ENCODE measurements at regions of chr6 and their contacts with region 1.

Region 1: DNA sequence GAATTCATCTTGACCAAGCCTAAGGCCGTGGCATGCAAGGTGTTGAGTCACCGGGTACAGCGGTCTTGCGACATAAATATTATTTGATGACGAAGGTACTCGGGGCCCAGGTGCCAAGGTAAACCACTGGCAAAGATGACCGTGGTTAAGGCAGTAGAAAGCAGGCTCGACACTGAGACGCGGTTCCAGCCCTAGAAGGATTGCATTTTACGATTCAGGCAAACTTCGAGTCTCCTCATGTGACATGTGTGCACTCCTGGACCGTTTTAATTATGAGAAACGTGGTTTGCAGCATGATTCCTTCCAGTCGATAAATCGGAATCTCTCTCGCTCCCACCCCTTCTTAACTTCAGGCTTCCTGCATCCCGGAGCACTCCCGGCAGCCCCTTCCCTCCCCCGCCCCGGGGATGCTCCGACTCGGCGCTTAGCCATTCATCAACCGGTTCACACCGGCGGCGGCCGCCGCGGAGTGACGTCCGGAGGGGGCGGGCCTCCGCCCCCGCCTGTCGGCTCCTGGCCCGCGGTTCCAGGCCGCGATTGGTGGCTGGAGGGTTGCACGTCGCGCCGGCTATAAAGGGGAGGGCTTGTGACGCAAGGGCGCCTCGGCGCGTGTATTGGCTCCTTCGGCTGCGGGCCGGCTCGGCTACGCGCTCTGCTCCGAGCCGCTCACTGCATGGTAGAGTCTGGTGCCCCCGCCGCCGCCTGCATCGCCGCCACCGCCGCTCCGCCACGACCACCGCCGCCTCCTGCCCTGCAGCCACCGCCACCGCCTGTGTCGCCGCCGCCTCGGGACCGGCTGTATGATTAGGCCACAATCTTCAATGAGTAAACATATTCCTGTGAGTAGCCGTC is at the starts of genes LOC128125822 and PTP4A1:
- DNase-seq: peak; percentile 98
- H3K4me3 Mint-ChIP-seq: peak within 1 kb of the TSS; percentile 88
- H3K27ac Mint-ChIP-seq: peak within 1 kb of the TSS; percentile 96
- H3K4me1 Mint-ChIP-seq: peaks cover 8% of the 10 kb centered on the region
- H3K27me3 Mint-ChIP-seq: no peaks in the 10 kb centered on the region
- CTCF ChIP-seq: no peak
- total RNA-seq, gene PTP4A1: 239 and 382 TPM in 2 replicates

Region 2: GRCh38 chr6:63347599-63347998 is 224.5 kb before region 1 on chr6:
- CTCF ChIA-PET with region 1: interaction called, 35 read pairs
- POLR2A ChIA-PET with region 1: interaction called, 64 read pairs
- intact Hi-C with region 1: no loop called
- DNase-seq: peak; percentile 72
- H3K4me3 Mint-ChIP-seq: no peak overlapping the region
- H3K27ac Mint-ChIP-seq: peak overlapping the region; percentile 43
- H3K4me1 Mint-ChIP-seq: peaks cover 13% of the 10 kb centered on the region
- H3K27me3 Mint-ChIP-seq: no peaks in the 10 kb centered on the region
- CTCF ChIP-seq: no peak

Region 3: DNA sequence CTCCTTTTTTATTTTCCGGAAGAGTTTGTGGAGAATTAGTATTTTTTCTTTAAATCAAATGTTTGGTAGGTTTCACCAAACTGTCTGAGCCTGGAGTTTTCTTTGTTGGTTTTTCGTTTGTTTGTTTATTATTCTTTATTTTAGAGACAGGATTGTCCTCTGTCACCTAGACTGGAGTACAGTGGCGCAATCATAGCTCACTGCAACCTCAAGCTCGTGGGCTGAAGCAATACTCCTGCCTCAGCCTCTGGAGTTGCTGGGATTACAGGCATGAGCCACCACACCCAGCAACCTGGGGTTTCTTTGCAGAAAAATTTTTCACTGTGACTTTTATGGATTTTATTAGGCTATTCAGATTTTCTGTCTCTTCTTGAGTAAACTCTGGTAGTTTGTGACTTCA is 120.0 kb before region 1 on chr6:
- CTCF ChIA-PET with region 1: no interaction called
- POLR2A ChIA-PET with region 1: no interaction called
- intact Hi-C with region 1: loop called (anchors 1 kb)
- DNase-seq: peak; percentile 69
- H3K4me3 Mint-ChIP-seq: no peak overlapping the region
- H3K27ac Mint-ChIP-seq: no peak overlapping the region
- H3K4me1 Mint-ChIP-seq: peaks cover 6% of the 10 kb centered on the region
- H3K27me3 Mint-ChIP-seq: no peaks in the 10 kb centered on the region
- CTCF ChIP-seq: no peak

Region 4: DNA sequence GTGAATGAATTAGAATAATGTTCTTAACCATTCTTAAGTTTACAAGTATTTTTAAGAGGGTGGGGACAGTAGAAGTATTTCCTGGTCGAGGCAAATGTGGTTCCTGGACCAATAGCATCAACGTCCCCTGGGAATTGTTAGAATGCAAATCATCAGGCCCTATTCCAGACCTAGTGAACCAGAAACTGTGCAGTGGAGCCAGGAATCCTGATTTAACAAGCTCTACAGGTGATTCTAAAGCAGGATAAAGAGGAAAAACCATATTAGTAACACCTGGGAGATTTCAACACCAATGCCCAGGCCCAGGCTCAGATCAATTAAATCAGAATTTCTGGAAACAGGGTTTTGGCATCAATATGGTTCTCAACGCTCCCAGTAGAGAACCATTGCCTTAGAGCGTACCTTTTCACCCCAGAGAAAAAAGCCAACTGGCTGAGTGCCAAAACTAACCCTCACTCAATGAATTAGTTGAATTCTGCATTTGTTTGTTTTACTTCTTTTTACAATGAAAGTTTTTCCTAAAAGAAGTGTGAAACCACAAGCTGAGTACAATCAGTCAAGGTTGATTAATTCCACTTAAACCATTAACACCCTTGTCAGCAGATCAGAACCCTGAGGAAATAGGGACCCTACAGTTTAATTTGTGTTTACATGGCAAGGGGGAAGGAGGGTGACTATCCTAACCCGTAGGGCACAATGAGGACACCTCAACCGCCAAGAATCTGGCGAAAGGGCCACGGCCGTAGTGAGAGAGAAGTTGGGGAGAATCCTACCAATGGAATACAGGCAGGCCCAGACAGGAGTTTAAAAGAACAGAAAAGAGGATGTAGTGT is 34.8 kb before region 1 on chr6:
- CTCF ChIA-PET with region 1: interaction called, 11 read pairs
- POLR2A ChIA-PET with region 1: interaction called, 41 read pairs
- intact Hi-C with region 1: no loop called
- DNase-seq: peak; percentile 92
- H3K4me3 Mint-ChIP-seq: no peak overlapping the region
- H3K27ac Mint-ChIP-seq: peak overlapping the region; percentile 74
- H3K4me1 Mint-ChIP-seq: peaks cover 13% of the 10 kb centered on the region
- H3K27me3 Mint-ChIP-seq: no peaks in the 10 kb centered on the region
- CTCF ChIP-seq: no peak

Region 5: DNA sequence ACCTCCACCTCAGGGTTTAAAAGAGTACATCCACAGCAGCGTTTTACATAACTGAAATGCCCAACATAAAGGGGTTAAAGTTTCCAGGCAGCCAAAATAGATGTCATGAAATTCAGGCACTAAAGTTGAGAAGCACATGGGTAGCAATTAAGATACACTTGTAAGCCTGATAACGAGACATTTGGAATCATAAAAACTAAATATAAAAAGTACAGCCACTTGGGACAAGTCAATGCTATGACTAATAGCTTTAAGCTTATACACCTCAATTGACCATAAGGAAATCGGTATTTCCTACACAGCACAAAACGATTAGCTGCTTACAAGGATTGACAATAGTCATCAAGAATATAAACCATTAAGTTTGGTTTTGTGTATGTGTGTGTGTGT is 12.0 kb after region 1 on chr6:
- CTCF ChIA-PET with region 1: interaction called, 10 read pairs
- POLR2A ChIA-PET with region 1: interaction called, 10 read pairs
- intact Hi-C with region 1: no loop called
- DNase-seq: peak; percentile 44
- H3K4me3 Mint-ChIP-seq: no peak overlapping the region
- H3K27ac Mint-ChIP-seq: no peak overlapping the region
- H3K4me1 Mint-ChIP-seq: peaks cover 4% of the 10 kb centered on the region
- H3K27me3 Mint-ChIP-seq: no peaks in the 10 kb centered on the region
- CTCF ChIP-seq: no peak

Region 6: GRCh38 chr6:63635588-63636517 is 63.7 kb after region 1 on chr6 and contains the start of gene PHF3:
- CTCF ChIA-PET with region 1: no interaction called
- POLR2A ChIA-PET with region 1: interaction called, 51 read pairs
- intact Hi-C with region 1: no loop called
- DNase-seq: peak; percentile 86
- H3K4me3 Mint-ChIP-seq: peak within 1 kb of the TSS; percentile 89
- H3K27ac Mint-ChIP-seq: peak within 1 kb of the TSS; percentile 95
- H3K4me1 Mint-ChIP-seq: peaks cover 24% of the 10 kb centered on the region
- H3K27me3 Mint-ChIP-seq: no peaks in the 10 kb centered on the region
- CTCF ChIP-seq: peak; percentile 5
- total RNA-seq, gene PHF3: 41.0 and 46.4 TPM in 2 replicates

Region 7: GRCh38 chr6:63783096-63783495 is 211.0 kb after region 1 on chr6:
- CTCF ChIA-PET with region 1: no interaction called
- POLR2A ChIA-PET with region 1: no interaction called
- intact Hi-C with region 1: no loop called
- DNase-seq: no peak
- H3K4me3 Mint-ChIP-seq: no peak overlapping the region
- H3K27ac Mint-ChIP-seq: no peak overlapping the region
- H3K4me1 Mint-ChIP-seq: no peaks in the 10 kb centered on the region
- H3K27me3 Mint-ChIP-seq: no peaks in the 10 kb centered on the region
- CTCF ChIP-seq: no peak

Region 8: DNA sequence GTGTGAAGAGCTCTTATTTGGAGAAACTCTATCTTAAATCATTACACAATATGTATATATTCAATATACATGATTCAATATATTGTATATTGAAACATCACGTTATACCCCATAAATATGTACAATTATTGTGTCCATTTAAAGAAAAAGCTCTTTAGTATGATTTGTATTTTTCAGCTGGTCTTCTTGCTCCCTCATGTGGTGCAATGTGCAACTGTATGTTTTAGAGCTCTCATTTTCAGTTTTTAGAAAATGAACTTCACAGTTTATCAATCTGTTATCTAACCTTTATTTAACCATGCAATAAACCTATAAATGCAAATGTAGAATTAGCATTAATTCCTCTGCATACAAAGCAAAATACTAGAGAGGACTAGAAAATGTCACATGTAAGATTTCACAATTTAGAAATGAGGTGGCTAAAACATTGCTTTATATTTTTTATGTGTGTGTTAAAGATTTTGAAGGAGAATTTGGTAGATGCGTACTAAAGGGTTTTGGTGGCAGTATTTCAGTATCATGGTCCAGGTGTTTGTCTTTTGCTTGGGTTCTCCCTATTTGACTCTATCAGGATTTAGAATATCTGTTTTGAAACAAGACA is 230.6 kb after region 1 on chr6:
- CTCF ChIA-PET with region 1: interaction called, 16 read pairs
- POLR2A ChIA-PET with region 1: interaction called, 73 read pairs
- intact Hi-C with region 1: loop called (anchors 1 kb)
- DNase-seq: peak; percentile 56
- H3K4me3 Mint-ChIP-seq: no peak overlapping the region
- H3K27ac Mint-ChIP-seq: peak overlapping the region; percentile 99
- H3K4me1 Mint-ChIP-seq: peaks cover 35% of the 10 kb centered on the region
- H3K27me3 Mint-ChIP-seq: no peaks in the 10 kb centered on the region
- CTCF ChIP-seq: peak; percentile 80